Activated B cell treated with CpG ODN at 0.5 μM for 24 hours (primary cell): ENCODE measurements at regions of chr6 and their contacts with region 1.

Region 1: GRCh38 chr6:170295510-170296422 is 4.9 kb upstream of the DLL1 start:
- DNase-seq: peak; percentile 61
- ATAC-seq: peak; percentile 69
- H3K4me3 Mint-ChIP-seq: peak overlapping the region; percentile 83
- H3K27ac Mint-ChIP-seq: no peak overlapping the region
- H3K4me1 Mint-ChIP-seq: peaks cover 40% of the 10 kb centered on the region
- H3K27me3 Mint-ChIP-seq: peaks cover 50% of the 10 kb centered on the region
- CTCF ChIP-seq: no peak

Region 2: DNA sequence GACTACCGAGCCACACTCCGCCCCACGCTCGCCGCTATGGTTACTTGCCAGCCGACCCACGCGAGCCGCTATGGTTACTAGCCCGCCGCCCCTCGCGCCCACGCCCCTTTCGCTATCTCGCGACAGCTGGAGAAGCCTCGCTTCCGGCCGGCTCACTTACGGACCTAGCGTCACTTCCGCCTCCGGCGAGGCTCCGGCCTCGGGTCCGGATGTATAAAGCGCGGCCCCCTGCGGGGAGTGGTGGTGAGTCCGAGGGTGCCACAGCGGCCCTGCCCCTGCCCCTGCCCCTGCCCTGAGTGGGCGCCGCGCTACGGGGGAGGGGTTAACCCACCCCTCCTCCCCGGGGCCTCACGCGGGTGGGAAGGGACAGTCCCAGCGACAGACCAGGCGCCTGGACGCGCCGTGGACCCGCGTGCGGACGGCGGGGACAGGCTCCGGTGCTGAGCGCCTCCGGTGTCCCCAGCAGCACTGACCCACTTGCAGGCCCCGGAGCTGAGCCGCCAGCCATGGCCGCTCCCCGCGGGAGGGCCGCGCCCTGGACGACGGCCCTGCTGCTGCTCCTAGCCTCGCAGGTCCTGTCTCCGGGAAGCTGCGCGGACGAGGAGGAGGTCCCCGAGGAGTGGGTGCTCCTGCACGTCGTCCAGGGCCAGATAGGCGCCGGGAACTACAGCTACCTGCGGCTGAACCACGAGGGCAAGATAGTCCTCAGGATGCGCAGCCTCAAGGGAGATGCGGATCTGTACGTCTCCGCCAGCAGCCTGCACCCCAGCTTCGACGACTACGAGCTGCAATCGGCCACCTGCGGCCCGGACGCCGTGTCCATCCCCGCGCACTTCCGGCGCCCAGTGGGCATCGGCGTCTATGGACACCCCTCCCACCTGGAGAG is 593.6 kb before region 1 on chr6 and contains the starts of genes C6orf120 and WDR27:
- CTCF ChIA-PET with region 1: no interaction called
- POLR2A ChIA-PET with region 1: interaction called, 9 read pairs
- intact Hi-C with region 1: loop called (anchors 5 kb)
- DNase-seq: peak; percentile 96
- ATAC-seq: peak; percentile 87
- H3K4me3 Mint-ChIP-seq: peak within 1 kb of the TSS; percentile 92
- H3K27ac Mint-ChIP-seq: peak within 1 kb of the TSS; percentile 88
- H3K4me1 Mint-ChIP-seq: peaks cover 51% of the 10 kb centered on the region
- H3K27me3 Mint-ChIP-seq: no peaks in the 10 kb centered on the region
- CTCF ChIP-seq: no peak
- total RNA-seq, gene C6orf120: 21.7 and 24.8 TPM in 2 replicates
- total RNA-seq, gene WDR27: 36.8 and 49.1 TPM in 2 replicates

Region 3: DNA sequence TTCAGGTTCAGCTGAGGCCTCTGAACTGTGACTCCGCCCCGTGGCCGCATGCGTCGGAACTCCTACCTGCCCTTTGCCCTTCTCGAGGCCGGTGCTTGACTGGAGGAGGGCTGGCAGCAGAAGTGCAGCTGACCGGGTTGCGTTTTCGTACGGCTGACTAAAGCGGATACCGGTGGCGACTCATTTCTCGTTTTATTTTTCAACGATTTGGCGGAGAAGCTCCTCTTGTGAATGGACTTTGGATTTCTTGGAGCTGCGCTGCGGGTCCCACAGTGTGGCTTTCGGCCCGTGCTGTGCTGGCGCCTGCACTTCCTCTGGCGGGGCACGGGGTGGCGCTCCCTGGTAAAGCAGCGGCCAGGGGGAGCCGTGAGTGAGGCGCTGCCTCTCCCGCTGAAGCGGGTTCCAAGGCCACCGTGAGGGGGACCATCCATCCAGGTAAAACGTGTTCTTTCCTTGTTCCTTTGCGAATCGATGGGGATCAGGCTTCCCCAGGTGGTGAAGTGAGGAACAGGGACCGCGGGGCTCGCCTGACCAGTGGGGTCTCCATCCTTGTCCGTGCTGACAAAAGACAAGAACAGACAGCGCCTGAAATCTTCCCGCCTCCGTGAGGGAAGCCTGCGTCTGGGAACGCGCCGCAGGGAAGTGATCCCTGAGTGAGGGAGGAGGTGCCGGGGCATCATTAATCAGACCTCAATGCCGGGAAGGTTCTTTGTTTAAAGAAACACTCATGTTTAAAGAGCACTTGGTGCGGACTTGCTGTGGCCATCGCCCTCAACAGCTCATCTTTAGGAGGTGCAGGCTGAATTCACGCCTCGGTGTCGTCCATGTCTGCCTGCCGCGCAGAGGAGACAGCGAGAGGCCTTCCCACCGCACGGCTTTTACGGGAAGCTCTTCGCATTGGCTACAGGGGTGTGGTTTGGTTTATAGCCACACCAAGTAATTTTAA is 505.5 kb before region 1 on chr6:
- CTCF ChIA-PET with region 1: interaction called, 3 read pairs
- POLR2A ChIA-PET with region 1: no interaction called
- intact Hi-C with region 1: loop called (anchors 1 kb)
- DNase-seq: peak; percentile 65
- ATAC-seq: peak; percentile 97
- H3K4me3 Mint-ChIP-seq: peak overlapping the region; percentile 85
- H3K27ac Mint-ChIP-seq: no peak overlapping the region
- H3K4me1 Mint-ChIP-seq: peaks cover 10% of the 10 kb centered on the region
- H3K27me3 Mint-ChIP-seq: peaks cover 35% of the 10 kb centered on the region
- CTCF ChIP-seq: peak; percentile 36

Region 4: GRCh38 chr6:169950558-169950957 is 345.2 kb before region 1 on chr6:
- CTCF ChIA-PET with region 1: no interaction called
- POLR2A ChIA-PET with region 1: no interaction called
- intact Hi-C with region 1: loop called (anchors 2 kb)
- DNase-seq: peak; percentile 9
- ATAC-seq: no peak
- H3K4me3 Mint-ChIP-seq: no peak overlapping the region
- H3K27ac Mint-ChIP-seq: no peak overlapping the region
- H3K4me1 Mint-ChIP-seq: no peaks in the 10 kb centered on the region
- H3K27me3 Mint-ChIP-seq: no peaks in the 10 kb centered on the region
- CTCF ChIP-seq: no peak

Region 5: DNA sequence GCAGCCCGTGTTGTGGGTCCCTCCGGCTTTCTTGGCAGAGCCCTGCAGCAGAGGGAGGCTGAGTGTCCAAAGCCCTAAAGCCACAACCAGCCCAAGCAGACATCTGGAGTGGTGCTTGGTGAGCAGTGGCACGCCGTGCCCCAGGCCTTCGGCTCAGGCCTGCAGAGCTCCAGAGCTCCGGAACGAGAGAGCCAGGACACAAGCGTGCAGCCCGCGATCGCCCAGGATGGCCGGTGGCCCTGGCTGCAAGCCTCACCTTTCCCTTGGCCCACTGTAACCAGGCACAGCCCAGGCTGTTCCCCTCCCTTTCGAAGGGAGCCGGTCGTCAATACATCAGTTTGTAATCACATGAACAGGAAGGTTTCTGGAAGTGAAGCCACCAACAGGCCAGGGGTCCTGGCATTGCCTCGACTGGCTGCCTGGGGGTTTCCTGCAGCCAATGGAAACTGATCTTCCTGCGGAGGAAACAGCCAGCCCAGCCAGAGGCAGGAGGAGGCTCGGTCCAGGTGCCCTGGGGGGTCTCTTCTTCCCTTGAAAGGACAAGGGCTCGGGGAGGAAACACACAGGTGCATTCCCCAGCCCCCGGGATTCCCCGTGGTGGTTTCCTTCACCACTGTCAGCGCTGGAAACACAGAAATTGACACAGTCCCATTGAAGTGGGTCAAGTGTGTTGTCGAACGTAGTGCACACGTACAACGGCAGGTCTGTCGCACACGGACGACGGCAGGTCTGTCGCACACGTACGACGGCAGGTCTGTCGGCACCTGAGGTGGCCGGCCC is 86.0 kb before region 1 on chr6:
- CTCF ChIA-PET with region 1: no interaction called
- POLR2A ChIA-PET with region 1: no interaction called
- intact Hi-C with region 1: no loop called
- DNase-seq: no peak
- ATAC-seq: no peak
- H3K4me3 Mint-ChIP-seq: no peak overlapping the region
- H3K27ac Mint-ChIP-seq: no peak overlapping the region
- H3K4me1 Mint-ChIP-seq: no peaks in the 10 kb centered on the region
- H3K27me3 Mint-ChIP-seq: peaks cover 7% of the 10 kb centered on the region
- CTCF ChIP-seq: no peak

Region 6: GRCh38 chr6:170271771-170272314 is 23.9 kb before region 1 on chr6:
- CTCF ChIA-PET with region 1: interaction called, 3 read pairs
- POLR2A ChIA-PET with region 1: no interaction called
- intact Hi-C with region 1: loop called (anchors 1 kb)
- DNase-seq: peak; percentile 53
- ATAC-seq: peak; percentile 88
- H3K4me3 Mint-ChIP-seq: peak overlapping the region; percentile 87
- H3K27ac Mint-ChIP-seq: peak overlapping the region; percentile 77
- H3K4me1 Mint-ChIP-seq: peaks cover 22% of the 10 kb centered on the region
- H3K27me3 Mint-ChIP-seq: no peaks in the 10 kb centered on the region
- CTCF ChIP-seq: no peak

Region 7: DNA sequence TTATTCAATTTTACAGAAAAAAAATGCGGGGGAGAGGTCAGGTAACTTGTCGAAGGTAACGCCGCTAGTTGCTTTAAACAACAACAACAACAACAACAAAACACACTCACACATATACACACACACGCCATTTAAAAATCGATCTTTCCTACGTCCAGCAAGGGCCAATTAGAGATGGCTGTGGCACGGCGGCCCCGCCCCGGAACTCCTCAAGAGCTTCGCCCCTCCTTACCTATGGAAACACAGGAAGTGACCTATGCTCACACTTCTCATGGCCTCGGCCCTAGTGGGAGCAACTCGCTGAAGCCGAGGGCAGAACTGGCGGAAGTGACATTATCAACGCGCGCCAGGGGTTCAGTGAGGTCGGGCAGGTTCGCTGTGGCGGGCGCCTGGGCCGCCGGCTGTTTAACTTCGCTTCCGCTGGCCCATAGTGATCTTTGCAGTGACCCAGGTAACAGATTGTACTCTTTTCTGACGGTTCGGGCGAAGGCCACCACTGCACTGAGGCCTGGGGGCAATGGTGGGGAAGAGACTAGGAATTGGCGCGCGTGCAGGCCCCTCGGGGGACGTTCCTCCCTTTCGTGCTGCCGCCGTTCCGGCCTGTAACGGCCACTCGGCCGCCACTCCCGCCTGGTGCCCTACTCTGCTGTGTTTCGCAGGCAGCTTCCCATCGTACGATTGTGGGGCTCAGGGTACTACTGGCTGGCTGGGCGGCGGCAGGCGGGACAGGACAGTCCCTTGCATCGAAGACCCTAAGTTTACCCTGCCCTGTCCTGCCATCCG is 258.4 kb after region 1 on chr6 and contains the start of gene TBP:
- CTCF ChIA-PET with region 1: no interaction called
- POLR2A ChIA-PET with region 1: no interaction called
- intact Hi-C with region 1: loop called (anchors 5 kb)
- DNase-seq: peak; percentile 93
- ATAC-seq: peak; percentile 94
- H3K4me3 Mint-ChIP-seq: no peak within 1 kb of the TSS
- H3K27ac Mint-ChIP-seq: no peak within 1 kb of the TSS
- H3K4me1 Mint-ChIP-seq: peaks cover 25% of the 10 kb centered on the region
- H3K27me3 Mint-ChIP-seq: no peaks in the 10 kb centered on the region
- CTCF ChIP-seq: no peak
- total RNA-seq, gene TBP: 19.4 and 21.6 TPM in 2 replicates